ENCODE measurements at regions of chr1 and their contacts with region 1.

Region 1: DNA sequence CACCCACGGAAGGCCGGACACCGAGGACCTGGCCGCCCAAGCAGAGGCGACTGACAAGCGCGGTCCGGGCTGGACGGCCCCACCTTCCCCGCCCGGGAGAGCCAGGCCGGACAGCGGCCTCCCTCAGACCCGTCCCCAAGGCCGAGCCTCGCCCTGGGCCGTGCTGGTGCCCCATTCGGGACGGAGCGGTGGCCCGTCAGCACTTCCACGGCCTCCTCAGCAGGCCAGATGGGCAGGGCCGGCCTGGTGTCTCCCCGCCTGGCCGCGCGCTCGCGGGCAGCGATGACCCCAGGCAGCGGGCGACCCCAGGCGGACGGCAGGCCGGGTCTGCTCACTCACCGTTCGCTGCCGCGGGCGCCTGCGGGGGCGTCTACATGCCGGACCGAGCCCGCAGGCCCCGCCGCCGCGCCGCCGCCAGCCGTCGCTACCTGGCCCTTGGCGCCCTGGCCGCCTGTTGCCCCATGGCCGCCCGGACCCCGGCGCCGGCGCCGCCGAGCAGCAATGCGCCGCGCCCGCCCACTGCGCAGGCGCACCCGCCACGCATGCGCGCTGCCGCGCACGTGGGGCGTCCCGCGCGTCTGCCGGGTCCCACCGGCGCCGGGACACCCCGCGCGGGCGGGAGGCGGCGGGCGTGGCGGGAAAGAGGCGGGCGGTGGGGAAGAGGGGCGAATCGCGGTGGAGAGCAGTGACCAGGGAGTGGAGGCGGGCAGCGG is at the start of gene NADK:
- DNase-seq: peak; percentile 69 to 84 (median 78)
- H3K4me3 ChIP-seq: peak within 1 kb of the TSS; percentile 36 to 72
- H3K4me3 Mint-ChIP-seq: peak within 1 kb of the TSS; percentile 86 to 96 (median 88)
- H3K27ac ChIP-seq: peak within 1 kb of the TSS; percentile 78
- H3K27ac Mint-ChIP-seq: peak within 1 kb of the TSS; percentile 93 to 98 (median 95)
- H3K4me1 ChIP-seq: peaks cover 69% of the 10 kb centered on the region
- H3K4me1 Mint-ChIP-seq: peaks cover 47 to 67% (median 58%) of the 10 kb centered on the region in 4 donors
- H3K27me3 ChIP-seq: no peaks in the 10 kb centered on the region
- H3K27me3 Mint-ChIP-seq: no peaks in the 10 kb centered on the region
- total RNA-seq, gene NADK: 48.9 to 56.0 TPM

Region 2: GRCh38 chr1:1721201-1721600 is 56.9 kb before region 1 on chr1:
- CTCF ChIA-PET with region 1: no interaction called
- POLR2A ChIA-PET with region 1: interaction called, 8 read pairs
- intact Hi-C with region 1: loop called (anchors 2 kb)
- DNase-seq: no peak
- H3K4me3 ChIP-seq: no peak overlapping the region
- H3K4me3 Mint-ChIP-seq: peak overlapping the region in 2 of 8 donors; percentile 3 to 17
- H3K27ac ChIP-seq: no peak overlapping the region
- H3K27ac Mint-ChIP-seq: peak overlapping the region in 3 of 7 donors; percentile 26 to 62 (median 59)
- H3K4me1 ChIP-seq: peaks cover 5% of the 10 kb centered on the region
- H3K4me1 Mint-ChIP-seq: peaks cover 4 to 15% (median 10%) of the 10 kb centered on the region in 4 donors
- H3K27me3 ChIP-seq: no peaks in the 10 kb centered on the region
- H3K27me3 Mint-ChIP-seq: no peaks in the 10 kb centered on the region

Measured in CD4-positive, alpha-beta memory T cell (primary cell).